Mammary epithelial cell (primary cell): ENCODE measurements at regions of chr4 and their contacts with region 1.

Region 1: GRCh38 chr4:95610061-95610569 is 61.3 kb upstream of the UNC5C start:
- DNase-seq: no peak
- H3K4me3 ChIP-seq: no peak overlapping the region
- H3K27ac ChIP-seq: no peak overlapping the region
- H3K4me1 ChIP-seq: no peaks in the 10 kb centered on the region
- H3K27me3 ChIP-seq: no peaks in the 10 kb centered on the region
- CTCF ChIP-seq: no peak

Region 2: DNA sequence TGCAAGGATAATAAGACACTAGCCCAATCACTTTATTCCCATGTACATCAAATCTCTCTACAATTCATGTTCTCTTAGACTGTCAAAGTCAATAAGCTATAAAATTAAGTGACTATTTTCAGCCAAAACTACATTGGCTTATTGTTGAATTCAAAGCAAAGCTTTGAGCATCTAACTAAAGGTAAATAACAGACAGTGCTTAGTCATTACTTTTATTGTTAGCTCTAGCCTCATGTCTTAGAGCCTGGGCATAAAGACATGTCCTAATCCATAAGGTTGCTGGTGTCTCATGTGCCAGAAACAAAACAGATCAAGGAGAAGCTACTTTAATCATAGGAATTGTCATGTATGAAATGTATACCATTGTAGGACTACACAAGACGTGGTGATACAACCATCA is 41.8 kb after region 1 on chr4:
- CTCF ChIA-PET with region 1: no interaction called
- dilution Hi-C with region 1: no loop called
- in situ Hi-C with region 1: no loop called
- intact Hi-C with region 1: loop called (anchors 2 kb)
- DNase-seq: no peak
- H3K4me3 ChIP-seq: no peak overlapping the region
- H3K27ac ChIP-seq: no peak overlapping the region
- H3K4me1 ChIP-seq: no peaks in the 10 kb centered on the region
- H3K27me3 ChIP-seq: no peaks in the 10 kb centered on the region
- CTCF ChIP-seq: no peak